Dendritic cell treated with granulocyte-macrophage colony-stimulating factor and Interleukin-4, amounts not matched to agents 40 ng/mL and 50 ng/mL, for 4 days (primary cell): ENCODE measurements at regions of chr17 and their contacts with region 1.

Region 1: DNA sequence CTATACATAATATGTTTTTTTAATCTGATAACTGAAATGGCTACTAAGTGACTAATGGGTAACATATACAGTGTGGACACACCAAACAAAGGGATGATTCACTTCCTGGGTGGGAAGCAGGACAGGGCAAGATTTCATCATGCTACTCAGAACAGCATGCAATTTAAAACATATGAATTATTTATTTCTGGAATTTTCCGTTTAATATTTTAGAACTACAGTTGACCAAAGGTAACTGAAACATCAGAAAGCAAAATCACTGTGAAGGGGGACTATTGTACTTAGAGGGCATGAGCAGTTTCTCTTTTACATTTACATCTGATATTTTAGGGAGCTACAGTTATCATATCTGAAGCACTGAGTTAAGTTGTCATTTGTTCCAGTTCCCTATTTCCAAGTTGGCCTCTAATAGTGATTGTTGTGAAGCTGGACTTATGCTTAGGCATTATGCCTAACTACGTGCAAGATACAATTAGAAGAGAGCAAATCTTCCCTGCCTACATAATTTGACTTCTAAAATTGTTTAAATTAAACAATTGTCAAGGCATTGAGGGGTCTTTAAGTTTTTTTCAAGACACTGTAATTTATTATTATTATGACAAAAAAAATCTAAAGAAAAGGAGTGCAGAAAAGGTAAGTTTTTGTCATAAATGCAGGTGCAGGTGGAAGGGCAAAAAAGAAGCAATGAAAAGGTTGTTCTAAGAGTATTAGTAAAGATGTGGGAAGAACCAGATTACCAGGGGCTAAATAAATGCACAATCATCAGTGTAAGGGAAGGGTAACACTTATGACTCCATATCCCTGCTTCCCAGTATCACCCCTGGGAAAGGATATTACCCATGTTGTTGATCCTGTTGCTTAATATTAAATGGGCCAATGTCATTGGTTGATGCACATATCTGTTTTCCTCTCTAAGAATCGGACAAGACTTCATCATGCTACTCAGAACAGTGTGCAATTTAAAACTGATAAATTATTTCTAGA is 34.4 kb upstream of the ABCA6 start:
- H3K4me3 Mint-ChIP-seq: no peak overlapping the region
- H3K27ac Mint-ChIP-seq: peak overlapping the region; percentile 83
- H3K4me1 Mint-ChIP-seq: peaks cover 33% of the 10 kb centered on the region
- H3K27me3 Mint-ChIP-seq: no peaks in the 10 kb centered on the region

Region 2: GRCh38 chr17:69123626-69124025 is 52.5 kb before region 1 on chr17:
- intact Hi-C with region 1: loop called (anchors 10 kb)
- H3K4me3 Mint-ChIP-seq: no peak overlapping the region
- H3K27ac Mint-ChIP-seq: no peak overlapping the region
- H3K4me1 Mint-ChIP-seq: peaks cover 37% of the 10 kb centered on the region
- H3K27me3 Mint-ChIP-seq: no peaks in the 10 kb centered on the region

Region 3: GRCh38 chr17:69141431-69142174 is 34.5 kb before region 1 on chr17 and contains the start of gene ABCA6:
- intact Hi-C with region 1: loop called (anchors 5 kb)
- H3K4me3 Mint-ChIP-seq: peak within 1 kb of the TSS; percentile 60
- H3K27ac Mint-ChIP-seq: peak within 1 kb of the TSS; percentile 99
- H3K4me1 Mint-ChIP-seq: peaks cover 32% of the 10 kb centered on the region
- H3K27me3 Mint-ChIP-seq: no peaks in the 10 kb centered on the region

Region 4: DNA sequence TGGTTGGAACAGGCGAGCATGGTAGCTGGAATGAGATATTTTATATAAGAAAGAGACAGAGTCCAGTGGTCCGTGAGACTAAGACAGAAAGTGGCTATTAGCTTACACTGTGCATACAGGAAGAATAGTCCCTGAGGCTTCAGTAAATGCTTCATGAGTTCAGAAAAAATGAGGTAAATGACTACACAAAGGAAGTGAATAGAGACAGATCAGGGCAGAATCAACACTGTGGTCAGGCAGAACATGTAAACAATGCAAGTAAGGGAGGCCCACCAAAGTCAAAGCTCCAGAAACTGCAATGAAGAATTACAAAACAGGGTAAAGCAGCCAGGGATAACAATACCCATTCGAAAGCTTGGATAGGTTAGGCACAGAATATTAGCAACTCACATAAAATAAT is 47.7 kb after region 1 on chr17:
- intact Hi-C with region 1: loop called (anchors 10 kb)
- H3K4me3 Mint-ChIP-seq: no peak overlapping the region
- H3K27ac Mint-ChIP-seq: peak overlapping the region; percentile 5
- H3K4me1 Mint-ChIP-seq: peaks cover 18% of the 10 kb centered on the region
- H3K27me3 Mint-ChIP-seq: no peaks in the 10 kb centered on the region